ENCODE measurements at regions of chr1 and their contacts with region 1.

Region 1: DNA sequence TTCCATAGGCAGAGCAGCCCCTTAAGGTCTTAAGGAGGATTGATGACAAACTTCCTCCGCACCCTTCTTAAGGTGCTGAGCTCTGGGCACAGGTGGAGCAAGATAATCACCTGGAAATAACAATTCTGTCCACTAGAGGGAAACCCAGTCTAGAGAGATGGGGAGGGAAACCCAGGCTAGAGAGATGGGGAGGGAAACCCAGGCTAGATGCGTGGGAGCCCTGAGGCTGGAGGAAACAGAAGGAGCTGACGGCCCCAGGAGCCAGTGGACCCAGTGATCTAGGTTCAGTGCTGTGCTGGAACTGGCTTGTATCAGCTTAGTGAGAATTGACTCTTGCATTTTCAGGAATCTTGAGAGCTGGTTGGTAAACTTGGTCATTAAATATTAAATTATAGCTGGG is 17.8 kb upstream of the MYCL start:
- DNase-seq: peak; percentile 93
- ATAC-seq: peak; percentile 97
- H3K4me3 ChIP-seq: no peak overlapping the region
- H3K27ac ChIP-seq: no peak overlapping the region
- H3K4me1 ChIP-seq: no peaks in the 10 kb centered on the region
- H3K27me3 ChIP-seq: no peaks in the 10 kb centered on the region
- CTCF ChIP-seq: peak; percentile 83

Region 2: DNA sequence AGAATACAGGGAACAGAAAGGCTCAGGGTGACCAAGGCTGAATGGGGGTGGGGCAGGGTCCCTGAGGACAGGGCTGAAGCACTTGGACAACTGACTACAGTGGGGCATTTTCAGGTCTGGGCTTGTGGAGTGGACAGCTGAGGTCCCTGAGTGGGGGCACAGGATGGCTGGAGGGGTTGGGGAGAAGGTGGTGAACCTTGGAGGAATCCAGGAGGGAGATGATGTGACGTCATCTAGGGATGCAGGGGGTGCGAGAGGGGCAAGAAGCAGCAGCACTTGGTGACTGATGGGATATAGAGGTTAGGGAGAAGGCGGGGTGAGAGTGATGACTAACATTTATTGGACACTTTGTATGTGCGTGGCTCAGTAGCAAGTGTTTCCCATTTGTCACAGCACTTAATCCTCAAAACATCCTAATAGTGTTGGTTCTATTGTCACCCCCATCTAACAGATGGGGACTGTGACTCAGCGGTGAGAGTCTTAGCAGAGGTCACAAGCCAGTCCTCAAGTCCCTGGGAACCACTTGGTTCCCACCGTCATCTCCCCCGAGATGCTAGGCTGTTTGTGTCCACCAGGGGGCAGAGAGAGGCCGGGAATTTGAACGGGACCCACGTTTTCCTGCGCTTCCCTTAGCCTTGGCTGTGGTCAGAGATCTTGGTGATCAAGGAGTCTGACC is 103.0 kb before region 1 on chr1:
- CTCF ChIA-PET with region 1: interaction called, 5 read pairs
- POLR2A ChIA-PET with region 1: no interaction called
- intact Hi-C with region 1: loop called (anchors 1 kb)
- DNase-seq: peak; percentile 89
- ATAC-seq: peak; percentile 76
- H3K4me3 ChIP-seq: no peak overlapping the region
- H3K27ac ChIP-seq: peak overlapping the region; percentile 70
- H3K4me1 ChIP-seq: peaks cover 44% of the 10 kb centered on the region
- H3K27me3 ChIP-seq: no peaks in the 10 kb centered on the region
- CTCF ChIP-seq: peak; percentile 75

Region 3: DNA sequence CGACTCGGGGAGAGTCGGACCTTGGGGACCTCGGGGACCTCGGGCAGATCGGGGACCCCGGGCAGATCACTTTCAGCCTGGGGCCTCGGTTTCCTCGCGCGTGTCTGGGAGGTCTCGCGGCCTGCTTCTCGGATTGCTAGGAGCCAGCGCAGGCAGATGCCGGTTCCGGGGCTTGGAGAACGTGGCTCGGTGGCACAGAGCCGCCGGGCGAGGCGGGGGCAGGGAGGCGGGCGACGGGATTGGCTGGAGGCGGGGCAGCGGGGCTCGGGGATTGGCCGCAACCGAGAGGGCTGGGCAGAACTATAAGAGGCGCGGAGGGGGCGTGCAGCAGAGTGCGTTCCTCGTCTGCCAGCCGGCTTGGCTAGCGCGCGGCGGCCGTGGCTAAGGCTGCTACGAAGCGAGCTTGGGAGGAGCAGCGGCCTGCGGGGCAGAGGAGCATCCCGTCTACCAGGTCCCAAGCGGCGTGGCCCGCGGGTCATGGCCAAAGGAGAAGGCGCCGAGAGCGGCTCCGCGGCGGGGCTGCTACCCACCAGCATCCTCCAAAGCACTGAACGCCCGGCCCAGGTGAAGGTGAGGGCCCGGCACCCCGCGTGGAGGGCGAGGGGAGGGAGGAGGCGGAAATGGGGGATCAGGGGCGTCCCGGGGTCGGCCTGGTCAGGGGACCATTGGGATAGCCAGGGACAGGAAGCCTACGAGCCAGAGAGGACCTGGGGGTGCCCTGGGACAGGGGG is 35.4 kb after region 1 on chr1 and contains the start of gene MFSD2A:
- CTCF ChIA-PET with region 1: interaction called, 19 read pairs
- POLR2A ChIA-PET with region 1: interaction called, 3 read pairs
- intact Hi-C with region 1: no loop called
- DNase-seq: peak; percentile 90
- ATAC-seq: peak; percentile 86
- H3K4me3 ChIP-seq: peak within 1 kb of the TSS; percentile 88
- H3K27ac ChIP-seq: peak within 1 kb of the TSS; percentile 4; the same call in 1 of the 2 replicates
- H3K4me1 ChIP-seq: peaks cover 17% of the 10 kb centered on the region
- H3K27me3 ChIP-seq: no peaks in the 10 kb centered on the region
- CTCF ChIP-seq: no peak
- total RNA-seq, gene MFSD2A: 8.6 and 12.1 TPM in 2 replicates

Region 4: DNA sequence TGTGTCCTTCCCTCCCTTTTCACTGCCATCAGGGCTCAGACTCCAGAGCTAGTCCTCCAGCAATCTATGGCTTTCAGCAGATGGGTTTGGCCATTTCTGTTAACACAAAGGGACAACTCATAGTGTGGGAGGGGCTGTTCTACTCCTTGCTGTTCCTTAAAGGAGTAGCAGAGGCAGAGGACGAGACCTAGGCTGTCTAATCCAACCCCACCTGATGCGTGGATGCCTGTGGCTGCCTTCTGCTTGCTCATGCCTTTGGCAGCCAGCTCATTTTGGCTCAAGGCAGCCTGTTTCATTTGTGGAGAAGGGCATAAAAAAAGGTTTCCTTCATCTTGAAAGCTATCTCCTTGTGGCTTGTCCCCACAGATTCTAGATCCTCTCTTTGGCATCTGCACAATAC is 62.4 kb after region 1 on chr1:
- CTCF ChIA-PET with region 1: no interaction called
- POLR2A ChIA-PET with region 1: interaction called, 17 read pairs
- intact Hi-C with region 1: no loop called
- DNase-seq: peak; percentile 87
- ATAC-seq: peak; percentile 97
- H3K4me3 ChIP-seq: no peak overlapping the region
- H3K27ac ChIP-seq: peak overlapping the region; percentile 37
- H3K4me1 ChIP-seq: peaks cover 17% of the 10 kb centered on the region
- H3K27me3 ChIP-seq: no peaks in the 10 kb centered on the region
- CTCF ChIP-seq: no peak

Region 5: GRCh38 chr1:40040511-40041465 is 121.2 kb after region 1 on chr1 and contains the start of gene CAP1:
- CTCF ChIA-PET with region 1: interaction called, 13 read pairs
- POLR2A ChIA-PET with region 1: no interaction called
- intact Hi-C with region 1: no loop called
- DNase-seq: peak; percentile 99
- ATAC-seq: peak; percentile 90
- H3K4me3 ChIP-seq: peak within 1 kb of the TSS; percentile 99
- H3K27ac ChIP-seq: peak within 1 kb of the TSS; percentile 87
- H3K4me1 ChIP-seq: peaks cover 34% of the 10 kb centered on the region
- H3K27me3 ChIP-seq: no peaks in the 10 kb centered on the region
- CTCF ChIP-seq: no peak
- total RNA-seq, gene CAP1: 214 and 243 TPM in 2 replicates

Region 6: GRCh38 chr1:40132383-40133311 is 213.1 kb after region 1 on chr1:
- CTCF ChIA-PET with region 1: no interaction called
- POLR2A ChIA-PET with region 1: no interaction called
- intact Hi-C with region 1: no loop called
- DNase-seq: no peak
- ATAC-seq: no peak
- H3K4me3 ChIP-seq: no peak overlapping the region
- H3K27ac ChIP-seq: no peak overlapping the region
- H3K4me1 ChIP-seq: peaks cover 10% of the 10 kb centered on the region
- H3K27me3 ChIP-seq: no peaks in the 10 kb centered on the region
- CTCF ChIP-seq: no peak

Measured in PC-3 (cell line).